Activated T-helper 1 cell treated with anti-CD3 and anti-CD28 coated beads, Interleukin-12 subunit alpha, Interleukin-12 subunit beta, Interleukin-2, Interleukin-4 antibody, amounts not matched to agents 30 ng/mL and 10 ng/mL and 1 ng/mL, durations not matched to agents 14 hours and 24 hours and 36 hours (primary cell): ENCODE measurements at regions of chr12 and their contacts with region 1.

Region 1: GRCh38 chr12:116194935-116195431 is 82.5 kb downstream of the MED13L start:
- DNase-seq: peak; percentile 60
- H3K4me3 Mint-ChIP-seq: peak overlapping the region; percentile 50
- H3K27ac Mint-ChIP-seq: peak overlapping the region; percentile 77
- H3K4me1 Mint-ChIP-seq: peaks cover 48% of the 10 kb centered on the region
- H3K27me3 Mint-ChIP-seq: peaks cover 2% of the 10 kb centered on the region

Region 2: GRCh38 chr12:115752913-115753726 is 441.9 kb before region 1 on chr12:
- intact Hi-C with region 1: no loop called
- DNase-seq: no peak
- H3K4me3 Mint-ChIP-seq: no peak overlapping the region
- H3K27ac Mint-ChIP-seq: no peak overlapping the region
- H3K4me1 Mint-ChIP-seq: no peaks in the 10 kb centered on the region
- H3K27me3 Mint-ChIP-seq: peaks cover 5% of the 10 kb centered on the region

Region 3: GRCh38 chr12:116015525-116015924 is 179.5 kb before region 1 on chr12:
- intact Hi-C with region 1: loop called (anchors 1 kb)
- DNase-seq: no peak
- H3K4me3 Mint-ChIP-seq: no peak overlapping the region
- H3K27ac Mint-ChIP-seq: no peak overlapping the region
- H3K4me1 Mint-ChIP-seq: peaks cover 7% of the 10 kb centered on the region
- H3K27me3 Mint-ChIP-seq: no peaks in the 10 kb centered on the region

Region 4: DNA sequence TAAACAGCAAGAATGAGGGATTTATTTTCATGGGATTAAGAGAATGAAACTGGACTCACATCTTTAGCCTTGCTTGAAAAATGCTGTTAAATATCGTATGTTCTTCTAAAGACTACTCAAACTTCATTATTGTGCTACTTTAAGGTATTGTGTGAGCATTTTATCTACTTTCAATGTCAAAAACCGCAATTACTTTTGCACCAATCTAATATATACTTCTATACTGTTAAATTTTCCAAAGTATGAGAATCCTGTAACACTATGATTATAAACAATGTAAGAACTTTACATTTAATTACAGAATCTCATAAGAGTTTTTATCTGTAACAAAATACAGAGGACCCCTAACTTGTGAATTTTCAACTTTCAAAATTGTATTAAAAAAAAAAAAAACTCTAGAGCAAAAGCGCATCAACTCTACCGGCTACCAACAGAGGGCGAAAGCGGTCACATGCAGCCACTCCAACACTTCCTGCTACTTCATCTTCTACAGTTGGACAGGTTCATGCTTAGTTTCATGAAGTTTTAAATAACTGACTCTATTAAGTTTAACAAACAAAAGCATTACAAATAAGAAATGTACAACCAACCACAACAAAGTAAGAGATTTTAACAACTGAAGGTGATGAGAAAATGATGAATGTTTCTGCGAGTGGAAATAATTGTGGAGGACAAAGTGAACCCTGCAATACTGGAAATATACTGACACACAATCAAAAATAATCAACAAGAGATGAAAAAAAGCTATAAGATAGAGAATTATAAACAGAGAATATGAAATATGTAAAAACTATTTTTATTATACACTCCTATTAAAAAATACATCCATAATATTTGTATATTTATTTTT is 128.4 kb before region 1 on chr12:
- intact Hi-C with region 1: loop called (anchors 2 kb)
- DNase-seq: peak; percentile 30
- H3K4me3 Mint-ChIP-seq: no peak overlapping the region
- H3K27ac Mint-ChIP-seq: no peak overlapping the region
- H3K4me1 Mint-ChIP-seq: peaks cover 17% of the 10 kb centered on the region
- H3K27me3 Mint-ChIP-seq: no peaks in the 10 kb centered on the region

Region 5: GRCh38 chr12:116142936-116143898 is 51.8 kb before region 1 on chr12:
- intact Hi-C with region 1: loop called (anchors 1 kb)
- DNase-seq: no peak
- H3K4me3 Mint-ChIP-seq: peak overlapping the region; percentile 45
- H3K27ac Mint-ChIP-seq: peak overlapping the region; percentile 81
- H3K4me1 Mint-ChIP-seq: peaks cover 52% of the 10 kb centered on the region
- H3K27me3 Mint-ChIP-seq: no peaks in the 10 kb centered on the region